Mammary epithelial cell (primary cell): ENCODE measurements at regions of chr1 and their contacts with region 1.

Region 1: DNA sequence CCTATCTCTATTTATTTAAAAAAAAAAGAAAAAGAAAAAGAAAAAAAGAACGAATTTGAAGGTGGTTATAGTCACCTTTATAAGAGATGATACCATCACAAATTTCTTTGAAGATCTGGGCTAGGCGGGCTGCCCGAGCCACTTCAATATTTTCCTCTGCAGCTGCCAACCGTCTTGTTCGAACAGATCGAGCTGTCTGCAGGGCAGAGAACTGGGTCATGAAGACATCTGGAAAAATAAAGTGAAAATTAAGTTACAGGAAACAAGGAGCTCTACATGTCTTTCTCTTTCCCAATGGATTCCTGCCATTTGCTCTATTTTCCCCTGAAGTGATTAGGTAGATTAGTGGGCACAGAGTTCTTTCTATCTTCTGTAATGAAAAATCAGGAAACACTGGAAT is 31.9 kb downstream of the RUSC1 start:
- DNase-seq: no peak
- H3K4me3 ChIP-seq: no peak overlapping the region
- H3K27ac ChIP-seq: no peak overlapping the region
- H3K4me1 ChIP-seq: no peaks in the 10 kb centered on the region
- H3K27me3 ChIP-seq: no peaks in the 10 kb centered on the region
- CTCF ChIP-seq: no peak

Region 2: DNA sequence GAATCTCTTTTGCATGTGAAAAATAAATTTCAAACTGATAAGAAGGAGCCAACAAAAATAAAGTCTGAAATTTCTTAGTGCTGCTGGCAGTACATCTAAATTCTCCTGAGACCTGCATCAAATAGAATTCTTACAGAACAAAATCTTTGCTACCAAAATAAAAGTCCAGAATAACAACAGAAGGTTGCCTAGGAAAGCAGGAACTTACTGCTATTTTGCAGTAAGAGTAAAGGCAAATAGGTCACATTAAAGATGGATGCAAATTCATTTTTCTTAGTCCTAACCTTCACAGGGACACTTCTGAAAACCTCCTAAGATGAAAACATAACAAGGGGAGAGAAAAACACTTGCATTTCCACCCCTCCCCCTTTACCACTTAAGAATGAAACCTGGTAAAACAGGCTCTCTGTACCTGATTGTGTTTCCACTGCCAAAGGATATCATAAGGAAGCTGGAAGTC is 27.0 kb after region 1 on chr1:
- CTCF ChIA-PET with region 1: no interaction called
- dilution Hi-C with region 1: loop called (anchors 5 kb)
- in situ Hi-C with region 1: no loop called
- intact Hi-C with region 1: no loop called
- DNase-seq: no peak
- H3K4me3 ChIP-seq: no peak overlapping the region
- H3K27ac ChIP-seq: no peak overlapping the region
- H3K4me1 ChIP-seq: no peaks in the 10 kb centered on the region
- H3K27me3 ChIP-seq: no peaks in the 10 kb centered on the region
- CTCF ChIP-seq: no peak

Region 3: DNA sequence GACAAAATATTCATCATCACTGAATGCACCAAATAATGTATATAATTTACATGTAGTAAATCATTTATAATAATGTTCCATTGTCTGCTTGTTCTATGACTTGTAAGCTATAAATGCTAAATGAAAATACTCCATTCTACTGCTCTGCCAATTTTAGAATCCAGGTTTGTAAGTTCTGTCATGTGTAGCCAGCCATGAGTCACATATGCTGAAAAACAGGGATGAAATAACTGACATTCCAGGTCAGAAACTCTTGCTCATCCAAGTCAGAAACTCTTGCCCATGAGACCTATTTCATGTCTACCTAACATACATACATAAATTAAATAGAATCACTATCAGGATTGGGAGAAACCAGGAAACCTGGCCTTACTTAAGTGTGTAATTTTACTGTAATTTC is 114.4 kb after region 1 on chr1:
- CTCF ChIA-PET with region 1: no interaction called
- dilution Hi-C with region 1: loop called (anchors 5 kb)
- in situ Hi-C with region 1: no loop called
- intact Hi-C with region 1: no loop called
- DNase-seq: peak; percentile 85
- H3K4me3 ChIP-seq: no peak overlapping the region
- H3K27ac ChIP-seq: peak overlapping the region; percentile 37
- H3K4me1 ChIP-seq: peaks cover 11% of the 10 kb centered on the region
- H3K27me3 ChIP-seq: no peaks in the 10 kb centered on the region
- CTCF ChIP-seq: no peak

Region 4: DNA sequence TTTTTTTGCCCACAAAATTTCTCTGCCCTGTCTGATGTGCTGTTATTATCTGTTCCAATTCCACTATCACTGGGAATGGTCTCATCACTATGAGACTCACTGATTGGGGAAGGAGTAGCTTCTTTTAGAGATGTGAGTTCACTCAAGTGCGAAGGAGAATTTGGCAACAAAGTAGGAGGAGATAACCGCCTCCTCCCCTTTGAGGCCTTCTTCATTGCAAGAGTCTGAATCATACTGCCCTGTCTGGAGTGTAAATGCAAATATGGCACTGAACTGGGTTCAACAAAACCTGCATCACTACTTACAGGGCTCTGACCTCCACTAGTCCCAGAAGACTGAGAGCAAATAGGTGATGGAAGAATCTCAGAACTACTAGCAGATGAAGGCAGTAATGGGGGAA is 126.6 kb after region 1 on chr1:
- CTCF ChIA-PET with region 1: no interaction called
- dilution Hi-C with region 1: no loop called
- in situ Hi-C with region 1: no loop called
- intact Hi-C with region 1: loop called (anchors 5 kb)
- DNase-seq: peak; percentile 32
- H3K4me3 ChIP-seq: no peak overlapping the region
- H3K27ac ChIP-seq: no peak overlapping the region
- H3K4me1 ChIP-seq: no peaks in the 10 kb centered on the region
- H3K27me3 ChIP-seq: no peaks in the 10 kb centered on the region
- CTCF ChIP-seq: no peak

Region 5: DNA sequence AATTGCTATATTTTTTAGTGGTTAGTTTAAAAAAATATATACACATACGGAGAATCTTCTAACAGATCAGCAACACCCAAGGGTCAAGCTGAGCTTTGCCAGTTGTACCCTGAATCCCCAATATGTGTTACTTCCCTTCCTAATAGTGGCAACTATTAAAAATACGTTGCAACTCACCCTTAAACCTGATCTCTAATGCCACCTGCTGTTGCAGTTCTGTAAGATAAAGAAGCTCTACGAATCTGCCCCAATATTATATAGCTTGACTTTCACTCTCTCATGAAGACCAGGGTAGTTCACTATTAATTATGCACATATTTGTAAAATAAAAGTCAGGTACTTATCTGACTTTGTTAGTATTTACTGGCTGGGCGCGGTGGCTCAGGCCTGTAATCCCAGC is 151.6 kb after region 1 on chr1:
- CTCF ChIA-PET with region 1: no interaction called
- dilution Hi-C with region 1: no loop called
- in situ Hi-C with region 1: no loop called
- intact Hi-C with region 1: loop called (anchors 10 kb)
- DNase-seq: peak; percentile 16
- H3K4me3 ChIP-seq: no peak overlapping the region
- H3K27ac ChIP-seq: no peak overlapping the region
- H3K4me1 ChIP-seq: no peaks in the 10 kb centered on the region
- H3K27me3 ChIP-seq: no peaks in the 10 kb centered on the region
- CTCF ChIP-seq: peak; percentile 37 to 57